Cardiac septum (tissue), 1 donor: ENCODE measurements at regions of chr2 and their contacts with region 1.

Region 1: GRCh38 chr2:18741895-18742732 is 152.7 kb upstream of the NT5C1B start:
- DNase-seq: no peak

Region 2: GRCh38 chr2:18435421-18436037 is 306.6 kb before region 1 on chr2:
- intact Hi-C with region 1: loop called (anchors 5 kb)
- DNase-seq: no peak